ENCODE measurements at regions of chrX and their contacts with region 1.

Region 1: DNA sequence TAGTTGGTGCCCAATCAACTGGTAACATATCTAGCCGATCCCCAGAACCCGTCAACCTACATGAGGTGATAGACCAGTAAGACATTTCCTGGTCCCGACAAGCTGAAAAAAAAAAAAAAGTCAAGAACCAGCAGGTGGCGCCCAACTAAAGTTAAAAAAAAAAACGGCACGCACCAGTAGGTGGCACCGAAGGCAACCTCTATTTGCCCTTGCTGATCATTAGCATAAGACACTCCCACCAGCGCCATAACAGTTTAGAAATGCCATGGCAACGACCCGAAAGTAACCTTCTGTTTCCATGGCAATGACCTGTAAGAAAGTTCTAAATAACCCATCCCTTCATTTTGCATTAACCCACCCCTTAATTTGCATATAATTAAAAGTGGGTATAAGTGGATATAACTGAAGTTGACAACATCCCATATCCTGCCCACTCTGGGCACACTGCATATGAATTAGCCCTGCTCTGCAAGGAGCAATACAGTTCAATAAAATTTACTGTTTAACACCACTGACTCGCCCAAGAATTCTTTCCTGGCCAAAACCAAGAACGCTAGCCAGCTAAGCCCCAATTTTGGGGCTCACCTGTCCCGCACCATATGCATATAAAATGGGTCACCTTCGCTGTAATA is 83.9 kb upstream of the SPANXB1 start:
- DNase-seq: peak; percentile 14
- H3K4me3 Mint-ChIP-seq: peak overlapping the region; percentile 55
- H3K27ac Mint-ChIP-seq: peak overlapping the region; percentile 95
- H3K4me1 Mint-ChIP-seq: peaks cover 22% of the 10 kb centered on the region
- H3K27me3 Mint-ChIP-seq: no peaks in the 10 kb centered on the region

Region 2: GRCh38 chrX:140762061-140762460 is 156.5 kb before region 1 on chrX:
- intact Hi-C with region 1: loop called (anchors 5 kb)
- DNase-seq: no peak
- H3K4me3 Mint-ChIP-seq: no peak overlapping the region
- H3K27ac Mint-ChIP-seq: no peak overlapping the region
- H3K4me1 Mint-ChIP-seq: no peaks in the 10 kb centered on the region
- H3K27me3 Mint-ChIP-seq: peaks cover 4% of the 10 kb centered on the region

Region 3: DNA sequence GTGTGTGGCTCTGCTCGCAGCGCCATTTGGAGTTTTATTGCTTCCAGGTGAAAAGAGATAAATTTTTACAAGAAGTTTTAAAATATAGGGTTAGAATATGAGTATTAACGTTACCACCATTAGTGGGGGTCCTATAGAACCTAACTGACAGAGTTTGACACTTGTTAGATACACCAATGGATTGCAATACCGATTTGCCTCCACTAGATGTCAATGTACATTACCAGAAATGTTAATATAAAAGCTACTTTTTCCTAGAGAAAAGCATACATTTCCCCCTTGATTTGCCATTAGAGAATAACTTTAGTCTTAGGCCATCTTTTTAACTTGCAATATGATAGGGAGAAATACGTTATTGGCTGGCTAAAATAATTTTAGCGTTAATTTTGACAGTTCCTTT is 100.6 kb before region 1 on chrX:
- intact Hi-C with region 1: loop called (anchors 1 kb)
- DNase-seq: no peak
- H3K4me3 Mint-ChIP-seq: no peak overlapping the region
- H3K27ac Mint-ChIP-seq: no peak overlapping the region
- H3K4me1 Mint-ChIP-seq: peaks cover 8% of the 10 kb centered on the region
- H3K27me3 Mint-ChIP-seq: no peaks in the 10 kb centered on the region

Region 4: DNA sequence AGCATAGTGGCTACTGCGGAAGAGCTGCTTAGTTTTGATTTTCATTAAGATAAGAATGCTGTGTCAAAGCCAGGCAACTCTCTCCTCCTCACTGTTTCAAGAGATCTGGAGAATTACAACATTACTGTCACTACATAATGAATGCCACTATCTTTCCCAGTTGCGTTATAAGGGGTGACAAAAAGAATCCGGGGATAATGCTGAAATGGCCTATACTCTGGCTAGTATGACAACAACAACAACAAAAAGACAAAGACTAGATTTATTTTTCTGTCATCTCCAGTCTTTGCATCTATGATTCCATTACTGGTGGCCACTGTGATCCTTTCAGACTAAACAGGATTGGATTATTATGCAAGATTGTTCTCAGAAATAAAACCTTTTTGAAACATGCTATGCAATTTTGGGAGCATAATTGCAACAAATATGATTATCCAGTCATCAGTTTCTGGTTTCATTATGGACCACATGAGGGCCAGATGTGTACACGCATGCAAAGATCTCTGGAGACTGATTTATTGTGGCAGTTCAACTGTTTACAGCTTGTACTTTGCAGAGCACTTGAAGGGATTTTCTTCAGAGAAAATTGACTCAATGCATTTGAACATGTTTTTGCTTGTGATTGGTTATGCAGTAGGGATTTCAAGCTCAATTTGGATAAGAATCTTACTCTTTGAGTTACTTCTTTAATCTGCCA is 52.7 kb after region 1 on chrX:
- intact Hi-C with region 1: no loop called
- DNase-seq: no peak
- H3K4me3 Mint-ChIP-seq: no peak overlapping the region
- H3K27ac Mint-ChIP-seq: no peak overlapping the region
- H3K4me1 Mint-ChIP-seq: no peaks in the 10 kb centered on the region
- H3K27me3 Mint-ChIP-seq: no peaks in the 10 kb centered on the region

Region 5: DNA sequence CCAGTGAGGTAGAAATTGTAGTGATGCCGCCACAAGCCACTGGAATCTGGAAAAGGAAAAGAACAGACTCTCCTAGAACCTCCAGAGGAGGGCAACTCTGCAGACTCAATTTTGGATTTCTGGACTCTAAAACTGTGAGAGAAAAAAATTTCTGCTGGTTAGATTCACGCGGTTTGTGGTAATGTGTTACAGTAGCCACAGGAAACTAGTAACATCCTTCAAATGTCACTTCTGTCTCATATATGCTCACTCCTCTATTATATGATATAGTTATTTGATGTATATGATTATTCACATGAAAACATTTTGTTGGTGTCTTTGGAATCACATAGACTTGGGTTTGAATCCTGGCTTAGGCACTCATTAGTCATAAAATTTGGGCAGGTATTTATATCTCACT is 239.6 kb after region 1 on chrX:
- intact Hi-C with region 1: loop called (anchors 5 kb)
- DNase-seq: no peak
- H3K4me3 Mint-ChIP-seq: no peak overlapping the region
- H3K27ac Mint-ChIP-seq: no peak overlapping the region
- H3K4me1 Mint-ChIP-seq: no peaks in the 10 kb centered on the region
- H3K27me3 Mint-ChIP-seq: no peaks in the 10 kb centered on the region

Region 6: DNA sequence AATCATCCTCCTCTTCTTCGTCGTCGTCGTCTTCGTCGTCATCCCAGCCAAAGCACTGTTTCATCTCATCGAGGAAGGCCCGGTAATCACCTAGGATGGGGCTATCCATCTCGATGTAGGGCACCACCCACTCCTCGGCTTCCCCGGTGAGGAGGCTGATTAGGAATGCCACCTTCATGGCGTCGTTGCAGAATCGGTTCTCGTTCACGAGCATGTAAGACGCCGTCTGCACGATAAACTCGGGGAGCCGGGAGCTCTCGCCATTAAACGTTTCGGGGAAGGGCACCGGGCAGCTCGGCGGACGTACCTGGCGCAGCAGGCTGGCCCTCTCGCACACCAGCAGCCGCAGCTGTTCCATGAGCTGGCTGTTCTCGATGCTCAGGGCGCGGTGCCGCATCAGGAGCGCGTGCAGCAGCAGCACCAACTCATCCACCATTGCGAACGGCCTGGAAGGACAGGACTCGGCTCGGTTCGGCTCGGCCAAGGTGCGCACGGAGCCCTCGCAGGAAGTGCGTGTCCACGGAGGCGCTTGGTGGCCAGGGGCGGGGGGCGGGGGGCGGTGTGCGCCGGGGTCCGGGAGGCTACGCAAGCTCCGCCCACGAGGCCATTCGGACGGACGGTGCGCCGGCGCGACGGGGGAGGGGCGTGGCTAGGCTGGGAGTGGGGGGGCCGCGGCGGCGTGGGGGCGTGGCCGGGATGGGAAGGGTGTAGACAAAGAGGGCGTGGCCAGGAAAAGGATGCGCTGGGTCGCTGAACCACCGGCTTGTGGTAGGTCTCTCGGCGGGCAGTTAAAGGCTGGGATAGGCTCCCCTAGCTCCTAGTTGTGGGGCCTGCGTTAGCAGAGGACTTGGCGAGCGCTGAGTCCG is 258.3 kb after region 1 on chrX and contains the start of gene LDOC1:
- intact Hi-C with region 1: loop called (anchors 5 kb)
- DNase-seq: peak; percentile 42
- H3K4me3 Mint-ChIP-seq: peak within 1 kb of the TSS; percentile 83
- H3K27ac Mint-ChIP-seq: peak within 1 kb of the TSS; percentile 67
- H3K4me1 Mint-ChIP-seq: peaks cover 5% of the 10 kb centered on the region
- H3K27me3 Mint-ChIP-seq: peaks cover 1% of the 10 kb centered on the region
- total RNA-seq, gene LDOC1: 5.4 and 6.9 TPM in 2 replicates